GM12878 (cell line): ENCODE measurements at regions of chr16 and their contacts with region 1.

Region 1: GRCh38 chr16:57422026-57422944 is 17.7 kb downstream of the CCL17 start:
- DNase-seq: no peak
- ATAC-seq: peak; percentile 49
- H3K4me3 ChIP-seq: no peak overlapping the region
- H3K27ac ChIP-seq: no peak overlapping the region
- H3K4me1 ChIP-seq: peaks cover 4% of the 10 kb centered on the region
- H3K27me3 ChIP-seq: no peaks in the 10 kb centered on the region
- CTCF ChIP-seq: peak; percentile 48 to 62 (median 62); a peak in 5 of 6 replicates
- EP300 ChIP-seq: no peak
- POLR2A ChIP-seq: no peak
- RAD21 ChIP-seq: peak; percentile 71

Region 2: DNA sequence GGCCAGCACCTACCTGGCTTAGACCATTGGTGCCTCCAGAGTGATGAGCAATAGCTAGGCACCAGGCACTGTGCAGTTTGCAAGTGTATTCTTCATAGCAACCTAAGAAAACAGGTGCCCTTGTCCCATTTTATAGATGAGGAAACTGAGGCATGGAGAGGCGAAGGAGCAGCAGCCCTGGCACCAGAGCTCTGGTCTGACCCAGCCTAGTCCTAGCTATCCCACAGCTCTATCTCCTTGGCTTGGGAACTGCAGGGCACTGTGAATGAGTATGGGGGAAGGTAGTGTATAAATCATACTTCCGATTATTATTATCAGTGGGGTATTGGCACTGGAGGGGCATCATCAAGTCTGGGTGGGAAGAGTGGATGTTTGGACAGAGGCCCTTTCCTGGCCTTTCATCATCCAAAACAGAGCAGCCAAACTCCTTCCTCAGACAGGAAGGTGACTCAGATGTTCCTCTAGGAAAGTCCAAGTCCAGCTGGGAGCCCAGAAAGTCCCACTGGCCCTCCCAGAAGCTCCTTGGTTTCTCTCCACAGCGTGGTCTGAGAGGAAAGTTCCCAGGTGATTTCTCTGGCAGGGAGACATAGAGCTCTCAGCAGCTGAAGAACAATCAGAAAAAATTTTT is 105.8 kb before region 1 on chr16:
- CTCF ChIA-PET with region 1: interaction called, 11 read pairs
- POLR2A ChIA-PET with region 1: interaction called, 3 read pairs
- RAD21 ChIA-PET with region 1: interaction called, 6 read pairs
- SMC1A ChIA-PET with region 1: interaction called, 3 read pairs
- in situ Hi-C with region 1: no loop called
- intact Hi-C with region 1: no loop called
- DNase-seq: no peak
- ATAC-seq: no peak
- H3K4me3 ChIP-seq: no peak overlapping the region
- H3K27ac ChIP-seq: no peak overlapping the region
- H3K4me1 ChIP-seq: peaks cover 16% of the 10 kb centered on the region
- H3K27me3 ChIP-seq: no peaks in the 10 kb centered on the region
- CTCF ChIP-seq: no peak
- EP300 ChIP-seq: no peak
- POLR2A ChIP-seq: no peak
- RAD21 ChIP-seq: no peak

Region 3: DNA sequence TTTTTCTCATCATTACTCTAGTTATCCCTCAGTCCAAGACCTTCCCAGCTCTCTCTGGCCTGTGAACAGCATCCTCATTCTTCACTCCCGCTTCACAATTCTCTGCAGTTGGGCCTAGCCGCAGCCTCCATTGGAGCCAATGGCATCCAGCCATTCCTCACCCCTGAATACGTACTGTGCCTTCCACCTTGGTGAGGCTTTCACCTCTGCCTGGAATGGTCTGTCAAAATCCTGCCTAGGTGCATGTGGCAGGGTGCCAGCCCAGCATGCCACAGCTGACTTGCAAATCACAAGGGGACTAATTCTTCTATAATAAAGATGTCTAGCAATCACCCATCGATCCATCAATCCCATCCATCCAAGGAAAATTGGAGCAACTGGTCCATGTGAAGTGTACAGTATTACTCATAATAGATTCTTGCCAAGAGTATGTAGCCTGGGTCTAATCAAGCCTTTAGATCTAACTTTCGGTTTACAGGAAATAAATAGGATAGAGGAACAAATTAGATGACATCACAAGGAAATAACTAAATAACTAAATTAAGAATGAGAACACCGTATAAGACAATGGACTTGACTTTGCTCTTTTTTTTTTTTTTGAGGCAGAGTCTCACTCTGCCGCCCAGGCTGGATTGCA is 55.1 kb before region 1 on chr16:
- CTCF ChIA-PET with region 1: interaction called, 7 read pairs
- POLR2A ChIA-PET with region 1: interaction called, 3 read pairs
- RAD21 ChIA-PET with region 1: interaction called, 11 read pairs
- SMC1A ChIA-PET with region 1: interaction called, 4 read pairs
- in situ Hi-C with region 1: no loop called
- intact Hi-C with region 1: no loop called
- DNase-seq: no peak
- ATAC-seq: no peak
- H3K4me3 ChIP-seq: no peak overlapping the region
- H3K27ac ChIP-seq: no peak overlapping the region
- H3K4me1 ChIP-seq: no peaks in the 10 kb centered on the region
- H3K27me3 ChIP-seq: no peaks in the 10 kb centered on the region
- CTCF ChIP-seq: no peak
- EP300 ChIP-seq: no peak
- POLR2A ChIP-seq: no peak; the same call in 1 of the 2 replicates
- RAD21 ChIP-seq: no peak

Region 4: GRCh38 chr16:57432989-57433388 is 10.7 kb after region 1 on chr16:
- CTCF ChIA-PET with region 1: interaction called, 11 read pairs
- POLR2A ChIA-PET with region 1: no interaction called
- RAD21 ChIA-PET with region 1: no interaction called
- SMC1A ChIA-PET with region 1: interaction called, 4 read pairs
- in situ Hi-C with region 1: no loop called
- intact Hi-C with region 1: no loop called
- DNase-seq: no peak
- ATAC-seq: no peak
- H3K4me3 ChIP-seq: no peak overlapping the region
- H3K27ac ChIP-seq: no peak overlapping the region
- H3K4me1 ChIP-seq: no peaks in the 10 kb centered on the region
- H3K27me3 ChIP-seq: no peaks in the 10 kb centered on the region
- CTCF ChIP-seq: no peak
- EP300 ChIP-seq: no peak
- POLR2A ChIP-seq: no peak
- RAD21 ChIP-seq: no peak

Region 5: DNA sequence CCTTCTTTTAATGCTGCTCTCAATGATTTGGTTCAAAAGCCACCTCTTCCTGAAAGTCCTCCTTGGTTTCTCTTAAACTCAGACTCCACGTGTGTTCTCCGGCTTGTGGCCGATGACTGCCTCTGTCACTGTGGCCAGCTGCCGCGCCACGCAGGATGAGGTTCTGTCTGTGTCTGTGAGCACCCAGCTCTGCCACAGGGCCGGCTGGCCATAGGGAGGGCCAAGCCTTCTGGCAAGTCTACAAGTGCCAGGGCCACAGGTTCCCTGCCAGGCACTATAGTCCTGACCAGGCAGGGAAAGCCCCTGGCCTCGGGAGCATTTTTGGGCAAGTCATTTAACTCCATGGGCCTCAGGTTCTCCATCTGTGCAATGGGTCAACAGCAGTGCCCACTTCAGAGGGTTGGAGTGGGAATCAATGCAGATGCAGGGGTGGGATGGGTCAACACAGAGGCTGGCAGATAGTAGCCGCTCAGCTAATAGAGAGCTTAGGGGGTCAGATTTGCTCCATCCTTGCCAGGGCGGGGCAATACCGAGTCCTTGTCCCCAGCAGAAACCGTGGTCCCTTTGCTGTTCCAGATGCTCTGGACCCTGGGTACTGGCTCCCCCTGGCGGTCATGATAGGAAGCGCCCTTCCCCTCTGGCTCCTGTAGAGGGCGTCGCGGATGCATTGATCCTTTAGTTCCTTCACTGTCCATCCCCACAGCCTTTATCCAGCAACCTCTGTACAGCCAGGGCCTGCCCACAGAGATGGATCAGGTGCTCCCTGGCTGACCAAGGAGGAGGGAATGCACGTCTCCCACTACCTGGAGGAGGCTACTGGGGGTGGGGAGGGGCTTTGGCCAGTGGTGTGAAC is 226.5 kb after region 1 on chr16:
- CTCF ChIA-PET with region 1: interaction called, 14 read pairs
- POLR2A ChIA-PET with region 1: interaction called, 6 read pairs
- RAD21 ChIA-PET with region 1: interaction called, 3 read pairs
- SMC1A ChIA-PET with region 1: interaction called, 3 read pairs
- in situ Hi-C with region 1: no loop called
- intact Hi-C with region 1: no loop called
- DNase-seq: peak; percentile 52
- ATAC-seq: peak; percentile 83
- H3K4me3 ChIP-seq: no peak overlapping the region
- H3K27ac ChIP-seq: peak overlapping the region; percentile 13; the same call in 1 of the 2 replicates
- H3K4me1 ChIP-seq: peaks cover 19% of the 10 kb centered on the region
- H3K27me3 ChIP-seq: no peaks in the 10 kb centered on the region
- CTCF ChIP-seq: peak; percentile 100; a peak in 5 of 6 replicates
- EP300 ChIP-seq: no peak
- POLR2A ChIP-seq: no peak
- RAD21 ChIP-seq: peak; percentile 99